ENCODE measurements at regions of chr14 and their contacts with region 1.

Region 1: GRCh38 chr14:22319526-22320361 is 269.3 kb downstream of the DAD1 start:
- DNase-seq: no peak
- H3K4me3 ChIP-seq: no peak overlapping the region
- H3K27ac ChIP-seq: no peak overlapping the region
- H3K4me1 ChIP-seq: peaks cover 0 to 3% (median 0%) of the 10 kb centered on the region in 3 donors
- H3K27me3 ChIP-seq: peaks cover 0 to 4% (median 0%) of the 10 kb centered on the region in 4 donors
- CTCF ChIP-seq: peak in 5 of 6 experiments; percentile 57 to 70 (median 67)
- POLR2A ChIP-seq: no peak

Region 2: DNA sequence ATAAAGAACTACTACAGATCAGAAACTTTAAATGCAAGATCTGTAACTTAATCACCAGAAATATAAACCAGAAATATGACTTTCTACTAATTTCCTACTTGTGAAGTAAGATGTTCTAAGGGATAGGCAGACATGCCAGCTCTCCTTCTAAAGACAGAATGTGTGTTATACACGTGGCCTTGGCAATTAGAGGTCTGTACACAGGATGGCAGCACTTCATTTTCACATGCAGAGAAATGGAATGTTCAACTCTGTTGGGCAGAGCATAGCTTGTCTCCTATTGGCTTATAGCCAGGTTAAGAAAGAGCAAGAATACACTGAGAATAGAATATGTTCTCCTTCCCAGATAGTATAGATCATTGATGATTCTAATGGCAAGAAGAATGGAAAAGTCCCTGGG is 134.6 kb before region 1 on chr14:
- intact Hi-C with region 1: no loop called
- DNase-seq: no peak
- H3K4me3 ChIP-seq: no peak overlapping the region
- H3K27ac ChIP-seq: no peak overlapping the region
- H3K4me1 ChIP-seq: peaks cover 0 to 3% (median 0%) of the 10 kb centered on the region in 3 donors
- H3K27me3 ChIP-seq: no peaks in the 10 kb centered on the region
- CTCF ChIP-seq: no peak
- POLR2A ChIP-seq: no peak

Region 3: GRCh38 chr14:22375321-22375930 is 55.7 kb after region 1 on chr14:
- intact Hi-C with region 1: loop called (anchors 5 kb)
- DNase-seq: no peak
- H3K4me3 ChIP-seq: no peak overlapping the region
- H3K27ac ChIP-seq: no peak overlapping the region
- H3K4me1 ChIP-seq: peaks cover 8 to 20% (median 9%) of the 10 kb centered on the region in 3 donors
- H3K27me3 ChIP-seq: peaks cover 0 to 7% (median 0%) of the 10 kb centered on the region in 4 donors
- CTCF ChIP-seq: peak; percentile 35 to 75 (median 56)
- POLR2A ChIP-seq: no peak

Region 4: GRCh38 chr14:22472935-22473854 is 153.5 kb after region 1 on chr14:
- intact Hi-C with region 1: loop called (anchors 10 kb)
- DNase-seq: no peak
- H3K4me3 ChIP-seq: no peak overlapping the region
- H3K27ac ChIP-seq: no peak overlapping the region
- H3K4me1 ChIP-seq: peaks cover 0 to 46% (median 7%) of the 10 kb centered on the region in 3 donors
- H3K27me3 ChIP-seq: peaks cover 0 to 31% (median 0%) of the 10 kb centered on the region in 4 donors
- CTCF ChIP-seq: peak; percentile 19 to 70 (median 54)
- POLR2A ChIP-seq: no peak

Measured in esophagus squamous epithelium (tissue), 5 donors.